ENCODE measurements at regions of chr1 and their contacts with region 1.

Region 1: DNA sequence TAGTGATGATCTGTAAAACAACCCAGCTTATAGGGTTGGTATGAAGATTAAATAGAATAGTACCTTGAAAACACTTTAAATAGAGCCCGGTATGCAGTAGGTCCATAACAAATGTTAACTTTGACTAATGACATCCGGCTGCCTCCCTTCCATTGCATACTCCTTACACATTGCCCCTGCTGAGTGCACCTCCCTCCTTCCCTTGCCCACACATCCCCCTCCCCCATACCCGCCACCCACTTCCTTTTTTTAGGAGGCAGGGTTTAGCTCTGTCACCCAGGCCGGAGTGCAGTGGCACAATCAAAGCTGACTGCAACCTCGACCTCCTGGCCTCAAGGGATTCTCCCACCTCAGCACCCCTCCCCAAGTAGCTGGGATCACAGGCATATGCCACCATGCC is 24.4 kb upstream of the ZC3H12A start:
- DNase-seq: peak; percentile 27
- H3K4me3 Mint-ChIP-seq: no peak overlapping the region
- H3K27ac Mint-ChIP-seq: no peak overlapping the region
- H3K4me1 Mint-ChIP-seq: peaks cover 13% of the 10 kb centered on the region
- H3K27me3 Mint-ChIP-seq: peaks cover 6% of the 10 kb centered on the region

Region 2: DNA sequence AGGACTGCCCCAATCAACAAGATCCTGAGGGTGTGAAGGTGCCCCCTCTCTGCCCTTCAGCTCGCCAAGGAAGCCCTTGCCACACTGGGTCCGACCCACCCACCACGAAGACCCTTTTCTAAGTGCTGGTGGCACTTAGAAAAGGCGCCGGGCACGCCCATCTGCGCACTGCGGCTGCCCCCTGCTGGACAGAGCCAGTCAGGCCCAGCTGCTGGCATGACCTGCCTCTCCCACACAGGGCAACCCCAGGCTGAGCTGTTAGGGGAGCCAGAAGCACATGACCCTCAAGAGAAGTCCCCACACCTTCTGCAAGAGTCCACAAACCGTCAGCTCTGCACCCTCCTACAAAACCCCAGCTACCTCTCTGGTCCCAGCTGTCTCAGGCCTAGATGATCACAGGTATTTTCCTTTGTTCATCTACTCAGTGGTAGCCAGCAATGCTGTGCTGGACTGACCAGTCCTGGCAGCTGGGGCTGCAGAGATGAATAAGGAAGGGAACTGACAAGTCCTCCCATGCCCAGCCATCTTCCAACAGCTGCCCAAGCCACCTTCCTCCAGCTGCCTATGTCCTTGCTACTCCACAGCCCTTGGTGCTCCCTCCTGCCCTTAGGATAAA is 15.5 kb before region 1 on chr1:
- CTCF ChIA-PET with region 1: interaction called, 14 read pairs
- POLR2A ChIA-PET with region 1: interaction called, 3 read pairs
- DNase-seq: peak; percentile 74
- H3K4me3 Mint-ChIP-seq: no peak overlapping the region
- H3K27ac Mint-ChIP-seq: no peak overlapping the region
- H3K4me1 Mint-ChIP-seq: no peaks in the 10 kb centered on the region
- H3K27me3 Mint-ChIP-seq: peaks cover 11% of the 10 kb centered on the region

Region 3: GRCh38 chr1:37465593-37466517 is 15.9 kb after region 1 on chr1:
- CTCF ChIA-PET with region 1: interaction called, 17 read pairs
- POLR2A ChIA-PET with region 1: interaction called, 3 read pairs
- DNase-seq: no peak
- H3K4me3 Mint-ChIP-seq: no peak overlapping the region
- H3K27ac Mint-ChIP-seq: no peak overlapping the region
- H3K4me1 Mint-ChIP-seq: peaks cover 12% of the 10 kb centered on the region
- H3K27me3 Mint-ChIP-seq: no peaks in the 10 kb centered on the region

Region 4: DNA sequence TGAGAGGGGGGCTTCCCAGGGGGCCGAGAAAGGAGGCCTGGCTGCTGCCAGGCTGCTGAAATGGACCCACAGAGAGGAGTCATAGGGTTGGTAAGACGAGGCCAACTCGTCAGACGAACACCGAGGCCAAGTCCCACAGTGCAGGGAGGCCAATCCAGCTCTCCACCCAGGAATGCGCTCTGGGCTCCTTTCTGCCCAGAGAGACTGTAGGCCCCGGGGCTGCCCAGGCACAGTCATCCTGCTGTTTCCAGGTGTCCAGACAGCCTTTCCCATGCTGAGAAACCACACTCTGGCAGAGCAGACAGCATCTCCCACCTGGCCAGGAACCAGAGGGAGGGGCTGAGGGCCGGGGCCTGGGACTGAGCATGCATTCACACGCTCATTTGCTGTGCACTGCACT is 211.5 kb after region 1 on chr1:
- CTCF ChIA-PET with region 1: no interaction called
- POLR2A ChIA-PET with region 1: no interaction called
- DNase-seq: no peak
- H3K4me3 Mint-ChIP-seq: no peak overlapping the region
- H3K27ac Mint-ChIP-seq: no peak overlapping the region
- H3K4me1 Mint-ChIP-seq: no peaks in the 10 kb centered on the region
- H3K27me3 Mint-ChIP-seq: peaks cover 14% of the 10 kb centered on the region

Region 5: DNA sequence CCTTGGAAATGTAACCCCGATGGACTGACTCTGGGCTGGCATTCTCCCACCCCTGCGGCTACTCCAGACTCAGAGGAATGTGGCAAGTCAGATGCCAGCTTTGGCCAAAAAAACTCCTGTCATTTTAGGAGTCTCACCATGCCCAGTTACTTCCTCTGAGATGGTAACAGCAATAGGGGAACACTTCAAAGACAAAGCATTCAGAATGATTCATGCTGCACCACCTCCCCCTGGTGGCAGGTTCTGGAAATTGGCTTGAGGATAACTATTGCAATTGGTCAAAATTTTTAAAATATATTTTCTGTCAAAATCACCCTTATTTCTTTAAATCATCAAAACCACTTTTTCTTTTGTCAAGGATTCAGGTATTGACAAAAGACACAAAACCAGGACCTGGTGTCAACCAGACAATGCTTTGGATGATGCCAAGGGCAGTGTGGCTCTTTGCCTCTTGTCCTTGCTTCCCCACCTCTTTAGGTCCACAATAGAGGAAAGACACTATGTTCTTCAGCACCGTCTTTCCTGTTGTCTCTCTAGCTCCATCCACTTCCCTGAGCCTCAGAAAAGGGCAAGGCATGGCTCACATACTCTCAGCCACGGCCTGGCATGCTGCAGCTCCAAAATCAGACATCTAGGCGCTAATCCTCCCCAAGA is 232.5 kb after region 1 on chr1:
- CTCF ChIA-PET with region 1: interaction called, 10 read pairs
- POLR2A ChIA-PET with region 1: no interaction called
- DNase-seq: peak; percentile 78
- H3K4me3 Mint-ChIP-seq: no peak overlapping the region
- H3K27ac Mint-ChIP-seq: no peak overlapping the region
- H3K4me1 Mint-ChIP-seq: peaks cover 6% of the 10 kb centered on the region
- H3K27me3 Mint-ChIP-seq: no peaks in the 10 kb centered on the region

Measured in activated CD4-positive, alpha-beta memory T cell treated with anti-CD3 and anti-CD28 coated beads, Interleukin-2, amount 10 ng/mL, durations not matched to agents 7 days and 5 days (primary cell).